ENCODE measurements at regions of chr18 and their contacts with region 1.

Region 1: DNA sequence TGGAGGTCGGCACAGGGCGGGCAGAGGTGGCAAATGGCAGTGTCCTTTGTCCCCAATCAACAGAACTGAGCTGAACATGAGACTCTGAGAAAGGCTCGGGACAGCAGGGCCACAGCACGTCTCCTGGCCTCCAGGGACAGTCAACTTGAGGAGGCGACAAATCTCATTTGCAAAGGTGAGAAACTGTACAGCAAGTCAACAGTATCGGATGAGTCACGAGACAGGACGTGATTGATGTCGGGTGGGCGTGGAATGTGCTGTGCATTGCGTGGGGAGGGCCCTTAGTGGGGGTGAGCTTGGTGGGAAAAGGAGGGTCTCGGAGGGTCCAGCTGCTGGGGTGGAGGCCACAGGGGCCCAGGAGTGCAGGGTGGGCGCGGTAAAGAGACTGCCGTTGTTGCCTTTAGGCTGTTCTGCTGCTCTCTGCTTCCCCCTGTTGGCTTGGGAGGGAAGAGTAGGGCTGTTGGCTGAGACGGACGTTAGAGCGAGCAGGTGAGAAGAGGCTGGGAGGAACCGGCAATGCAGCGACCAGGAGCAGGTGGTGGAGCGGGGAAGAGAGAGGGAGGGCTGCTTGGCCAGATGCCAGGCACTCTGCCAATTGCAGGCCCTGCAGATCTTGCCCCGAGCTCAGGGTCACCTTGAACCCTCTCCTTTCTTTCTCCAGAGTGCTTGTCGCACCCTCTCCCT is 164.3 kb downstream of the BCL2 start:
- DNase-seq: peak; percentile 59
- CTCF ChIP-seq: peak; percentile 82

Region 2: DNA sequence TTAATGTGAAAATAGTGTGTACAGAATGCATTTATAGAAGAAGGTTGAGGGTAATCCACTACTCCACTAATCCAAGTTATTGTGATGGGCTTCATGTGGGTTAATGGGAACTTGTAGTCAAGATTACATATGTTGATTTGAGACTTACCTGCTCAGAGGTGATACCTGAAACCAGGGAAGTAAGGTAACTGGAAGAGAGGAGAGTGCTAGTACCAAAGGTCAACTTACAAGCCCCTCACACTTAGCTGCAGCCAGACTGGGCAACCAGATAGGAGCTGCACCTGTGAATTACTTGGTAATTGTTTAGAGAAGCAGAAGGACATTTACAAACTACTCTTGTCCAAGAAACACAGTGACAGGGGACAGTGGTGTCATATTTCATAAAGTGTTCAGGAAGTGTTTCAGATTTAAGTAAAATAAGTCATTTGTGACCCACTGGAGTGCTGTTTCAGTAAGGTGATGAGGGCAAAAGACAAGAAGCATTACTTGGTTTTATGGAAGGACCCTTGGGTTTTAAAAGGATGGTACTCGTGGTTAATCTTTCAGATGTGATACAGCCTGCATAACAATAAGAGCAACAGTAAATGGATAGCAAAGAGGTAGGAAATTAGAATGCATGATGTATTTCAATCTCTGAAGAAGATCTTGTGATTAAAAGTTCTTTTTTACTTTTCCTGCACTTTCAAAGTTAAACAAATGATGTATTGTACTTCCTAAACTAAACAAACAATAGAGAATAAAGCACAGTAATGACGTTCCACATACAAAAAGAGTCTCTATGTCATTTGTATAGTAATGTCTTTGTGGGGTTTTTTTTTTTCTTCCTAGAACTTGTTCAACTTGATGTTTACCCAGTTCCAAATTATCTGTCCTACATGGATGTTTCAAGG is 250.7 kb before region 1 on chr18:
- in situ Hi-C with region 1: no loop called
- DNase-seq: no peak
- CTCF ChIP-seq: no peak

Region 3: DNA sequence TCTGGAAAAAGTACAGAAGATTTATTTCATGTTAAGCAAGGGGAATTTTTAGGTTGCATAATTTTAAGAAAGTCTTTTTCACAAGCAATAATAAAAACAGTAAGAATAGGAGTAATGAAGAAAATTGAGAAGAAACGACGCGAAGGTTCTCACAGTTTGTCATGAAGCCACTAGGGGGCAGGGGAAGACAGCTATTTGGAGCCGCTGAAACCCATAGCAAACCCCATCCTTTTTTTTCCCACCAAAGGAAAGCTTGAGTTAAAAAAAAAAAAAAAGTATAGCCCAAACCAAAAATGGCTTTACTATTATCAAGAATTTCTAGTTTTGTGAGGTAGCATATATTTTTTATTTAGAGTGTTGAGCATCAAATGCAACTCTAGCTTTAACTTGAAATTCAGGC is 139.0 kb before region 1 on chr18:
- in situ Hi-C with region 1: no loop called
- DNase-seq: peak; percentile 74
- CTCF ChIP-seq: peak; percentile 80

Region 4: DNA sequence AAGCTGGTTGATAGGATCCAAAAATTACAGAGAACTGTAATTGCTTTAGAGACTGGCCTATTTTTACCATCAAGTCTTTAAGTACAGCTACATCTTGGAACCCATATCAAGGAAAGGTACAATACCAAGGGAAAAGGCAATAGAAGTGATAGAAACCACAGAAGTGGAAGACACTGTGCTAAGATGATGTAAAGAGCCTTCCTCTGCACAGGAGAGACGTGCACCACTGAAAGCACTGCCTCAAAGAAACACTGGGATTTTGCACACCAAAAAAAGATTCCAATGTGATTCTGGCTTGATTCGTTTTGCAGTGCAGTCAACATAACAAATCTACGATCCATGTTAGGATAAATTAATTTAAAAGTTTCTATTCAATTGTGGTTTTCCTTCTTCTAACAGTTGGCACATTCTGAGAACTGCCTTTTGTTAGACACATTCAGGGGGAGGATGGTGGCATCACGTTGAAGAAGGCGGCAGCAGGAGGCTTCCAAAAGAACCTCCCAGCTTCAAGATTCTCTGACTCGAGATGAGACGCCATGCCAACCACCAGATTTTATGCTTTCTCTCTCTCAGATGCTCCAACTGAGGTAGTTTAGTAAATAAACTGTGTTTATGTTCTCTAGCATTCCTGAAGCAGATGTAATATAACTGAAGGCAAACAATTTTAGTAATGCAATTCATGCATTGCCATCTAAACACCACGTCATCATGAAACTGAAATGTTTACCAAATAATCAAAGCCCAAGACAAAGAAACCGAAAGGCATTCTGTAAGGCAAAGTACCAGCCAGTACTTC is 61.4 kb after region 1 on chr18:
- in situ Hi-C with region 1: no loop called
- DNase-seq: no peak
- CTCF ChIP-seq: no peak

Region 5: DNA sequence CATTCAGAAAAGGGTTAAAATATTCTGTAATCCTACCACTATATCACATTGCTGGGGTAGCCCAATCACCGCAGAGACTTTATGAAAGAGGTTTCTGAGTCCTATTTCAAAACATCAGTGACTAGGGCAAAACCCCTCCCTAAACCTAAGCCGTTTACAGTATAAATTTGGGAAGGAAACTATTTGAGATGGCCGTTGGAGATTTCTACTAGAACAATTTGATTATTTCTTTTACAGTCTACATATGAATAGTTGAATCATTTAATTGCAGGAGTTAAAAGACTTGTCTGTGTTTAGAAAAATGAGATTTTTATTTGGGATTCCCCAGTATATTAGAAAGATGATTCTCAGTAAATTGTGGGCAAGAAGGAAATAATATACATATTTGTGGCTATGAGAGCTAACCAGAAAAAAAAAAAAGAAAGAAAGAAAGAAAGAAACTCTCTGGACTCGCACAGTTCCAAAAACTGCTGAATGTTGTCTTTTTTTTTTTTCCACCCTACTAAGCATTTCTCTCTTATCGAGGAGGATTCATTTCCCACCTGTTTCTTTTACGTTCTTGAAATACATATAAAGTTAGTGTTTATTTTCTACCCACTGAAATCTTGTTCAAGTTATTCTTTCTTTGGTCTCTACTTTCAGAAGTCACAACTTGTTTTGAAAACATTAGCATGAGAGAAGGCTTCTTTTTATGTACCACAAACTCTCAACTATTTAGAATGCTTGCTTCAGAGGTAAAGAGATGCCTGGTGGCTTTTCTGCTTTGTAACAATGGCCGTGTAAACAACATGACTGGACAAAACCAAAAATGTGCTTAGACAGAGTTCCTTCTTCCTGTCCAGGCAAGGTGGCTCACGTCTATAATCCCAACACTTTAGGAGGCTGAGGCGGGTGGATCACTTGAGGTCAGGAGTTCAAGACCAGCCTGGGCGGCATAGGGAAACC is 98.4 kb after region 1 on chr18:
- in situ Hi-C with region 1: no loop called
- DNase-seq: no peak
- CTCF ChIP-seq: no peak

Region 6: GRCh38 chr18:63317982-63318881 is 162.9 kb after region 1 on chr18:
- in situ Hi-C with region 1: loop called (anchors 10 kb)
- DNase-seq: peak; percentile 79
- CTCF ChIP-seq: peak; percentile 93